PC-3 (cell line): ENCODE measurements at regions of chr12 and their contacts with region 1.

Region 1: GRCh38 chr12:39319187-39319586 is 123.7 kb downstream of the KIF21A start:
- DNase-seq: no peak
- ATAC-seq: peak; percentile 64
- H3K4me3 ChIP-seq: no peak overlapping the region
- H3K27ac ChIP-seq: no peak overlapping the region
- H3K4me1 ChIP-seq: no peaks in the 10 kb centered on the region
- H3K27me3 ChIP-seq: no peaks in the 10 kb centered on the region
- CTCF ChIP-seq: no peak

Region 2: DNA sequence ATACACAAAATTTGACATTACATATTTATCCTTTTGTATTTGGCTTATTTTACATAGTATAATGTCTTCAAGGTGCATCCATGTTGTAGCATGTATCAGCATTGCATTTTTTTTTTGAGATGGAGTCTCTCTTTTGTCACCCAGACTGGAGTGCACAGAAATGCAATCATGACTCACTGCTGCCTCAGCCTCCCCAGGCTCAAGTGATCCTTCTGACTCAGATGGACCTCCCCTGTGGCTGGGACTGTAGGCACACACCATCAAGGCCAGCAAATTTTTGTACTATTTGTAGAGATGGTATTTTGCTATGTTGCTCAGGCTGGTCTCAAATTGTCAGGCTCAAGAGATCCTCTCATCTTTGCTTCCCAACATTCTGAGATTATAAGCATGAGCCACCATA is 1217.0 kb before region 1 on chr12:
- CTCF ChIA-PET with region 1: no interaction called
- POLR2A ChIA-PET with region 1: no interaction called
- intact Hi-C with region 1: no loop called
- DNase-seq: peak; percentile 76
- ATAC-seq: peak; percentile 95
- H3K4me3 ChIP-seq: no peak overlapping the region
- H3K27ac ChIP-seq: no peak overlapping the region
- H3K4me1 ChIP-seq: peaks cover 11% of the 10 kb centered on the region
- H3K27me3 ChIP-seq: no peaks in the 10 kb centered on the region
- CTCF ChIP-seq: no peak

Region 3: DNA sequence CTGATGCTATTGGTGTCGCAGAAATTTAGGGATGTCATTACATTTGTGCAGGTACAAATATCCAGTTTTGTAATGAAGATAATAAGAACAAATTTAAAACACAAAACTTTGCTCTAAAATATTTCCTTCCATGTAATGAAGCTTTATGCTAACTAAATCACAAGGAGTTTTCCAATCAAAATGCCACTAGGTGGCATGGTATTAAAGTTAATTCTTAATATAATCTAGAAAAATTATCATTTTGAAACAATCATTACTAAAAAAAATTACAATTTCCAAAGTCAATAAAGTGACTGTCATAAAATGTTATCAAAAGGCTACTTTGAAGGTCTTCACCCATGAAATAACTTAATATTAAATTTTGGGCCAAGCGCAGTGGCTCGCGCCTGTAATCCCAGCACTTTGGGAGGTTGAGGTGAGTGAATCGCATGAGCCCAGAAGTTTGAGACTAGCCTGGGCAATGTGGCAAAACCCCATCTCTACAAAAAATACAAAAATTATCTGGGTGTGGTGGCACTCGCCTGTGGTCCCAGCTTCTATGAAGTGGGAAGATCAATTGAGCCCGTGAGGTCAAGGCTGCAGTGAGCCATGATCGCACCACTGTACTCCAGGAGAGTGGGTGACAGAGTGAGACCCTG is 46.3 kb after region 1 on chr12:
- CTCF ChIA-PET with region 1: interaction called, 3 read pairs
- POLR2A ChIA-PET with region 1: no interaction called
- intact Hi-C with region 1: loop called (anchors 5 kb)
- DNase-seq: no peak
- ATAC-seq: no peak
- H3K4me3 ChIP-seq: no peak overlapping the region
- H3K27ac ChIP-seq: no peak overlapping the region
- H3K4me1 ChIP-seq: peaks cover 24% of the 10 kb centered on the region
- H3K27me3 ChIP-seq: no peaks in the 10 kb centered on the region
- CTCF ChIP-seq: peak; percentile 56

Region 4: DNA sequence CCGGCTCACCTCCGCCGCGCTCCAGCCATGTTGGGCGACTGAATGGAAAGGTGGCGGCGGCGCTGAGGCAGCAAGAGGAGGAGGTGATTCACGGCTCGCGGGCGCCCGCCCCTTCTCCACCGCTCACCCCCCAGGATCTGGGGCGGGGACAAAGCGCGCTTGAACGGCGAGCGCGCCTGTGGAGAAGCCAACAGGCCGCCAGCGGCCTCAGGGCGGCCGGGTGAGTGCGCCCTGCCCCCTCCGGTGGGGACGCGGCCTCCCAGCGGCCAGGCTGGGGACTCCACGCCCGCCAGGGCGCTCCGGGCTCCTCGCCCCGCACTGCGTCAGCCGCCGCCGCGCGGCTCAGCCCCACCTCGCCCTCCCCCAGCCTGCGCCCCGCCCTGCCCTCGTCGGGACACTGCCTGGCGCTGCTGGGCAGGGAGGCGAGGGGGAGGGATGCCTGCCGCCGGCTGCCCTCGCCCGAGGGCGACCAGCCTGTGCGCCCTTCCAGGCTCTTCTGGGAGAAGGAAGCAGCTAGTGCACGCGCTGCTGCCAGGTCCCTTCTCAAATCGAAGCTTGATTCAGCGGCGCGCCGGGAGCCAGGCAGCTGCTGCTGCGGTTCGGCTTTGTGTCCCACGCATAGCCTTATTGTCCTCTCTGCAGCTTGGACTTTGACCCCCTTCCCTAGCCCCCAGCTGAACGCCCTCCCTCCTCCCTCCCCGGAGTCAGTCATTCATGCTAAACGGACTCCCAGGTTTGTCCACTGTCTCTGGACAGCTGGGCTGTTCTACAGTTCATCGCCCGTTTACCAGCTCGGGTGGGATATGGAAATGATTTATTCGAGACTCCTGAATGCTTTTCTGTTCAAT is 124.1 kb after region 1 on chr12 and contains the start of gene KIF21A:
- CTCF ChIA-PET with region 1: no interaction called
- POLR2A ChIA-PET with region 1: no interaction called
- intact Hi-C with region 1: loop called (anchors 2 kb)
- DNase-seq: peak; percentile 97
- ATAC-seq: peak; percentile 90
- H3K4me3 ChIP-seq: peak within 1 kb of the TSS; percentile 81
- H3K27ac ChIP-seq: peak within 1 kb of the TSS; percentile 61
- H3K4me1 ChIP-seq: peaks cover 22% of the 10 kb centered on the region
- H3K27me3 ChIP-seq: no peaks in the 10 kb centered on the region
- CTCF ChIP-seq: no peak
- total RNA-seq, gene KIF21A: 21.7 and 25.1 TPM in 2 replicates

Region 5: GRCh38 chr12:39538679-39539104 is 219.5 kb after region 1 on chr12:
- CTCF ChIA-PET with region 1: no interaction called
- POLR2A ChIA-PET with region 1: no interaction called
- intact Hi-C with region 1: loop called (anchors 5 kb)
- DNase-seq: no peak
- ATAC-seq: no peak
- H3K4me3 ChIP-seq: no peak overlapping the region
- H3K27ac ChIP-seq: no peak overlapping the region
- H3K4me1 ChIP-seq: 0 out of 2 replicates have a peak, but pooled peaks cover 4% of the 10 kb centered on the region
- H3K27me3 ChIP-seq: no peaks in the 10 kb centered on the region
- CTCF ChIP-seq: no peak

Region 6: GRCh38 chr12:39692258-39692853 is 373.2 kb after region 1 on chr12:
- CTCF ChIA-PET with region 1: no interaction called
- POLR2A ChIA-PET with region 1: no interaction called
- intact Hi-C with region 1: loop called (anchors 2 kb)
- DNase-seq: peak; percentile 34
- ATAC-seq: no peak
- H3K4me3 ChIP-seq: no peak overlapping the region
- H3K27ac ChIP-seq: no peak overlapping the region
- H3K4me1 ChIP-seq: no peaks in the 10 kb centered on the region; the same call in 1 of the 2 replicates
- H3K27me3 ChIP-seq: peaks cover 4% of the 10 kb centered on the region; the same call in 1 of the 2 replicates
- CTCF ChIP-seq: peak; percentile 62